Left lung (tissue), 14 donors: ENCODE measurements at regions of chr1 and their contacts with region 1.

Region 1: GRCh38 chr1:172002725-172003345 is 161.5 kb downstream of the DNM3 start:
- DNase-seq: peak in 2 of 4 donors; percentile 40 to 73
- ATAC-seq: peak; percentile 69
- H3K4me3 ChIP-seq: no peak overlapping the region
- H3K27ac ChIP-seq: no peak overlapping the region
- H3K4me1 ChIP-seq: no peaks in the 10 kb centered on the region
- H3K27me3 ChIP-seq: no peaks in the 10 kb centered on the region
- CTCF ChIP-seq: peak; percentile 54 to 69

Region 2: DNA sequence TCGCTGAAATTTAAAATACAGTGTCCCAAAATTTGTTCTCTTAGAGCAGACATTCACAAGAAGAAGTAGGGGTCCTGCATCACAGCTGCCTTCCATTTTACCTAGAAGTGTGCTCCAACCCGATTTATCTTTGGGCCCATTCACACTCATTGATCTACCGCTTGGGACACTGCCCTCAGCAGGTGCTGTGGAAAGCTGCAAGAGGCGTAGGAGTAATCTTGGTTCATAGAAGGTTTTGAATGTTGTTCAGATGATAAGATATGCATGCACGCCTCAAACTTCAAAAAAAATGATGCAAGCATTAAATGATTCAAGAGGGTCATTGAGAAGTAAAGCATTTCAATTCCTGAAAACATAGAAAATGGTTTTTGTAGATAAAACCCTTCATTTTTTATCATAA is 399.1 kb after region 1 on chr1:
- intact Hi-C with region 1: loop called in 1 of 2 experiments (anchors 10 kb)
- DNase-seq: no peak
- ATAC-seq: no peak
- H3K4me3 ChIP-seq: no peak overlapping the region
- H3K27ac ChIP-seq: peak overlapping the region in 1 of 2 donors; percentile 50
- H3K4me1 ChIP-seq: peaks cover 10 to 11% of the 10 kb centered on the region in 2 donors
- H3K27me3 ChIP-seq: no peaks in the 10 kb centered on the region
- CTCF ChIP-seq: no peak

Region 3: DNA sequence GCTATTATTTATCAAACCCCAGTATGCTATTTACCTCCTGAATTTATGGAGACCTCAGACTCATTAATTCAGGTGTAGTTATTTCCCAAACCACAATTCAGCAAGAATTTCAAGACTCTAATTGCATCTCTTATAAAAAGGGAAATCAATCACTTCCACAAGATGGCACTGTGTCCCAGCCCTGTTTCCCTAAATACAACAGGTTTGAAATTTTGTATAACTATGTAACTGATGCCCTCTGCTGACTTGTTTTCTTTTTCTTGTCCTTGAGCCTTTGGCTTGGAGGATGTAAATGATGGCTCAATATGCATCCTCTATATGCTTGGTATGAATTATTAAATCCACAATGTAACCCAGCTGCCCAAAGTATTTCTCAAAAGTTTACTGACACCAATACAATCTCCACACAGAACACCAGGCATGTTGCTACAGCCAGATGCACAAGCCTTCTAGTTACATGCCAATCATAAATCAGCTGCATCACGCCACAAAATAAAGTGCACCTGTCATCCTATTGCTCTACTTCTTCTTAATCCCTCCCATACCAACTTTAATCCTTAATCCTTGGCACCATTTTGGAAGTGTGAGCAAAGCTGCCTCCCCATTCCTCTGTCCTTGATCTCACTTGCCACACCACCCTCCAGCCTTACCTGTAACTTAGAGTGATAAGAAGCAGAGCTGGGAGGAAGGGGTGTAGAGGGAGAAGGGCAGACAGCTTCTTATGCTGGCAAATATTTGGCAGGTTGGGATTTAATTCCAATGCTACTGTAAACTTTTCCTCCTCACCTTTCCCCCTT is 426.7 kb after region 1 on chr1:
- intact Hi-C with region 1: loop called in 1 of 2 experiments (anchors 10 kb)
- DNase-seq: peak in 2 of 4 donors; percentile 49 to 70
- ATAC-seq: peak; percentile 81
- H3K4me3 ChIP-seq: no peak overlapping the region
- H3K27ac ChIP-seq: no peak overlapping the region
- H3K4me1 ChIP-seq: peaks cover 0 to 5% of the 10 kb centered on the region in 2 donors
- H3K27me3 ChIP-seq: no peaks in the 10 kb centered on the region
- CTCF ChIP-seq: peak; percentile 42 to 69